Activated CD4-positive, alpha-beta memory T cell treated with anti-CD3 and anti-CD28 coated beads, Interleukin-2, amount 10 ng/mL, durations not matched to agents 7 days and 5 days (primary cell): ENCODE measurements at regions of chr14 and their contacts with region 1.

Region 1: DNA sequence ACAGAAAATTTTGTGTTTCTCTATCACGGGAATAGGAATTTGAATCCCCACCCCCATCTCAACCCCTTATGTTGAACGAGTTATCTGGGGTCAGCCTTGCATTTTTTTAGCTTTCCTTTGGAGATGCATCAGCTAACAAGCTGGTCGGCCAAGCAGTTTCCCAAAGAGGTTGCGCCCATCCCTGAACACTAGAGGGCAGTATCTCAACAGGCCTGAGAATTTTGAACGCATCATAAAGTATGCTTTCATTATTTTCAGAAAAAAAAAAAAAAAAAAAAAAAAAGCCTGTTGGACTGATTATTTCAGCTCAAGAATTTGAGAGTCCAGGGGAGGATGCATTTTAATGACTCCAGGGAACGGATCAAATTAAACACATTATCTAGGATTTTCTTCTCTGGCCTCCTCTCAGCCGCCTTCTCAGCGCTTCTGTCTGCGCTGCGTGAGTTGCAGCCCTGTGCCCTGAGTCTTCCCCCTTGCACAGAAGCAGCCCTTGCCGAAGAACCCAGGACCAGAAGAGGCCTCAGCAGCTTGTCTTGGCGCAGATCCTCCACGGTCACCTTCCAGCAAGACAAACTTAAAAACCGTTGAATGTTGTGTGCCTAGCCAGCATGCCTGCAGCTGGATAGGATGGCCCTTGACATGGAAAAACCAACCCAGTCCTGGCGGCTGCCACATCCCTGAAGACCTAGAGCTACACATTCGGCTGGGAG is 76.6 kb upstream of the GZMB start:
- DNase-seq: peak; percentile 69
- H3K4me3 Mint-ChIP-seq: no peak overlapping the region
- H3K27ac Mint-ChIP-seq: no peak overlapping the region
- H3K4me1 Mint-ChIP-seq: no peaks in the 10 kb centered on the region
- H3K27me3 Mint-ChIP-seq: peaks cover 1% of the 10 kb centered on the region

Region 2: GRCh38 chr14:24605435-24606190 is 104.9 kb before region 1 on chr14:
- CTCF ChIA-PET with region 1: interaction called, 32 read pairs
- POLR2A ChIA-PET with region 1: interaction called, 3 read pairs
- DNase-seq: peak; percentile 81
- H3K4me3 Mint-ChIP-seq: peak overlapping the region; percentile 65
- H3K27ac Mint-ChIP-seq: peak overlapping the region; percentile 80
- H3K4me1 Mint-ChIP-seq: peaks cover 50% of the 10 kb centered on the region
- H3K27me3 Mint-ChIP-seq: peaks cover 6% of the 10 kb centered on the region

Region 3: GRCh38 chr14:24678801-24679247 is 31.7 kb before region 1 on chr14:
- CTCF ChIA-PET with region 1: interaction called, 16 read pairs
- POLR2A ChIA-PET with region 1: interaction called, 3 read pairs
- DNase-seq: peak; percentile 82
- H3K4me3 Mint-ChIP-seq: peak overlapping the region; percentile 69
- H3K27ac Mint-ChIP-seq: peak overlapping the region; percentile 70
- H3K4me1 Mint-ChIP-seq: peaks cover 68% of the 10 kb centered on the region
- H3K27me3 Mint-ChIP-seq: peaks cover 6% of the 10 kb centered on the region

Region 4: DNA sequence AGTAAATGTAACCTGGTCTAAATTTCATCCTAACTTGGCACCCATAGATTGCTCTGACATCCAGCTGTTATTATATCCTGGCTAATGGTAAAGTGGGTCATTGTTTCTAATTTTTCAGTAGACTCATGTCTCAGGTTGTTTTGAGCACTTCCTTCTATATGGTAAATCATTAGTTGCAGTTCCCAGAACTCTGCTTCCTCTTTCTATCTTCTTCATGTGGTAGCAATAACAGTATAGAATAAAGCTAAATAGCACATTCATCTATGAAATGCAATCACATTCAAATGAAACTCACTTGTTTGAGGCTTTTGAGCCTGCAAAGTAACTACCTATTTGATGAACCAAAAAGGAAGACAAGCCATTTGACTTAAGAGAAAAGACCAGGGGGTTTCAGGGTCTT is 11.5 kb before region 1 on chr14:
- CTCF ChIA-PET with region 1: interaction called, 22 read pairs
- POLR2A ChIA-PET with region 1: interaction called, 4 read pairs
- DNase-seq: no peak
- H3K4me3 Mint-ChIP-seq: no peak overlapping the region
- H3K27ac Mint-ChIP-seq: no peak overlapping the region
- H3K4me1 Mint-ChIP-seq: peaks cover 15% of the 10 kb centered on the region
- H3K27me3 Mint-ChIP-seq: no peaks in the 10 kb centered on the region

Region 5: GRCh38 chr14:24806061-24806678 is 95.6 kb after region 1 on chr14:
- CTCF ChIA-PET with region 1: interaction called, 20 read pairs
- POLR2A ChIA-PET with region 1: no interaction called
- DNase-seq: peak; percentile 43
- H3K4me3 Mint-ChIP-seq: no peak overlapping the region
- H3K27ac Mint-ChIP-seq: no peak overlapping the region
- H3K4me1 Mint-ChIP-seq: no peaks in the 10 kb centered on the region
- H3K27me3 Mint-ChIP-seq: peaks cover 15% of the 10 kb centered on the region